ENCODE measurements at regions of chr14 and their contacts with region 1.

Region 1: GRCh38 chr14:64450255-64450654 is 15.0 kb upstream of the AKAP5 start:
- DNase-seq: peak; percentile 23
- H3K4me3 Mint-ChIP-seq: no peak overlapping the region
- H3K27ac Mint-ChIP-seq: peak overlapping the region; percentile 77
- H3K4me1 Mint-ChIP-seq: peaks cover 24% of the 10 kb centered on the region
- H3K27me3 Mint-ChIP-seq: no peaks in the 10 kb centered on the region

Region 2: DNA sequence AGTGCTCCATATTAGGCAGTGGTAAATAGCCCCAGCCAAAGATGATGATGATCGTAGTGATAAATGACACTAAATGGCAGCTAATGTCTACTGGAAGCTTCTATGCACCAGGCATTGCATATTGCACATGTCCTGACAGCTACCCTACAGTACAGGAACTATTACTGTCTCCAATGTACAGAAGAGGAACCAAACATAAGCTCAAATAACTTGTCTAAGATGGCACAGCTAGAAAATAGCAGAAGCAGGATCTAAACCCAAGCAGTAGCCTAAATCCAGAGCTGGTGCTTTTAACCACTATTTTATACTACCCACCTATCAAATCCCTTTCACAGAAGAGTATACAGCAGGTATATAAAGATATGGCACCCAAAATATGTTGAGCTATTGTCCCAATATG is 185.0 kb before region 1 on chr14:
- CTCF ChIA-PET with region 1: no interaction called
- POLR2A ChIA-PET with region 1: no interaction called
- intact Hi-C with region 1: no loop called
- DNase-seq: no peak
- H3K4me3 Mint-ChIP-seq: no peak overlapping the region
- H3K27ac Mint-ChIP-seq: no peak overlapping the region
- H3K4me1 Mint-ChIP-seq: peaks cover 13% of the 10 kb centered on the region
- H3K27me3 Mint-ChIP-seq: no peaks in the 10 kb centered on the region

Region 3: GRCh38 chr14:64465191-64465822 is 15.1 kb after region 1 on chr14 and contains the start of gene AKAP5:
- CTCF ChIA-PET with region 1: interaction called, 3 read pairs
- POLR2A ChIA-PET with region 1: interaction called, 4 read pairs
- intact Hi-C with region 1: loop called (anchors 2 kb)
- DNase-seq: peak; percentile 69
- H3K4me3 Mint-ChIP-seq: peak within 1 kb of the TSS; percentile 75
- H3K27ac Mint-ChIP-seq: peak within 1 kb of the TSS; percentile 3
- H3K4me1 Mint-ChIP-seq: peaks cover 37% of the 10 kb centered on the region
- H3K27me3 Mint-ChIP-seq: no peaks in the 10 kb centered on the region
- total RNA-seq, gene AKAP5: 0.74 to 1.1 TPM

Measured in activated CD4-positive, alpha-beta memory T cell treated with anti-CD3 and anti-CD28 coated beads for 36 hours (primary cell).